Heart left ventricle (tissue), 16 donors: ENCODE measurements at regions of chr7 and their contacts with region 1.

Region 1: DNA sequence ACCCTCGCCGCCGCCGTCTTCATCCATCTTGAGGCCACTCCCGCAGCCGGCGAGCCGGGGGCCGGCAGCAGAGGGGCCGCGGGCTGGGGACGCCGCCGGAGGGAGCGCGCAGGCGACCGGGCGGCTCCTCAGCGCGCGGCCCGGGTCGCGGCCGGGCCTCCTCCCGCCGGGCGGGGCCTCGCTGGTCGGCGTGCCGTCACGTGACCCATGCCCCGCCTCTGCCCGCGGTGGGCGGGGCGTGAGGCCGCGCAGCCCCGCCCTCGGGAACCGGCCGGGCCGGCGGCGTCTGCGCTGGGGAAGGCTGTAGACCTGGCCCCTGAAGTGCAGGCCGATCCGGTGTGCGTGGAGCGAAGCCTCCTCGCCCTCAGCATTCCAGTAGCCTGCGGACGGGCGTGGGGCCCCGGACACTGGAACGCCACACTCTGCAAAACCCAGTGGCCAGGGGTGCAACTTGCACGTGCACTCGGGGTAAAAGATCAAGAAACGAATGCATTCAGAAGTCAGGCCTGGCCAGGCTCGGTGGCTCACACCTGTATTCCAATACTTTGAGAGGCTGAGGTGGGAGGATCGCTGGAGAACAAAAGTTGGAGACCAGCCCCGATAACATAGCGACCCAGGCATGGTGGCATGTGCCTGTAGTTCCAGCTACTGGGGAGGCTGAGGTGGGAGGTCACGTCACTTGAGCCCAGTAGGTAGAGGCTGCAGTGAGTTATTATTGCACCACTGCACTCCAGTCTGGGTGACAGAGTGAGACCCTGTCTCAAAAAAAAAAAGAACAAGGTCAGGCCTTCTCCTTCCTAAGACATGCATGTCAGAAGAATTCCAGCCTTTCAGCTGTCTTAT is at the start of gene CYTH3:
- DNase-seq: peak; percentile 72 to 93 (median 88)
- ATAC-seq: peak; percentile 79 to 97 (median 92)
- H3K4me3 ChIP-seq: peak within 1 kb of the TSS; percentile 75 to 98 (median 94)
- H3K27ac ChIP-seq: peak within 1 kb of the TSS; percentile 73 to 95 (median 90)
- H3K4me1 ChIP-seq: peaks cover 7 to 43% (median 27%) of the 10 kb centered on the region in 12 donors
- H3K27me3 ChIP-seq: no peaks in the 10 kb centered on the region
- CTCF ChIP-seq: peak in 1 of 12 donors; percentile 3
- POLR2A ChIP-seq: peak; percentile 10 to 53
- total RNA-seq, gene CYTH3: 17.2 to 49.7 (median 22.1) TPM

Region 2: GRCh38 chr7:6015917-6016652 is 256.6 kb before region 1 on chr7:
- intact Hi-C with region 1: no loop called
- DNase-seq: peak; percentile 46 to 81 (median 77)
- ATAC-seq: peak; percentile 62 to 90 (median 82)
- H3K4me3 ChIP-seq: no peak overlapping the region
- H3K27ac ChIP-seq: peak overlapping the region in 8 of 12 donors; percentile 0 to 67 (median 46)
- H3K4me1 ChIP-seq: peaks cover 0 to 30% (median 6%) of the 10 kb centered on the region in 12 donors
- H3K27me3 ChIP-seq: no peaks in the 10 kb centered on the region
- CTCF ChIP-seq: no peak
- POLR2A ChIP-seq: no peak

Region 3: DNA sequence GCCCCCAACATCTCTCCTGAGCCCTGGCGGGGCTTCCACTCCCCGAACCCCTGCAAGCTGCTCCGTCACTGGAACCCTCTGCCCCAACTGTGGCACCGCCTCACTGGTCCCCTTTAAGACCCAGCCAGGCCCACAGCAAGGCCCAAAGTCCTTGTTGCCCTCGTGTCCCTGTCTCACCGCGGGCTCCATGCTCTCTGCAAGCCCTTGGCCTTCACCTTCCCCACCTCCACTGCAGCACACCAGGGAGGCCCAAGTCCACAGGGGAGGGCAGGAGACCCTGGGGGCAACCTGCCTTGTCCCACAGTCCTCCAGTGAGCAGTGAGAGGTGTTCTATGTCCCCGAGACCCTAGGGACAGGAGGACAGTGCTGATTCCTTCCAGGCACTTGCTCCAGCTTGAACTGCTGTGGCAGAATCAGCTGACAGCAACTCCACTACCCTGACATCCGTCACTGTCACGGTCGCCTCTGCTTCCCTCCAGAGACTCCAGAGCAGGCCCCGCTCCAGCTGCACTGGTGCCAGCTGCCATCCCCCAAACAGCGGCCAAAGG is 105.6 kb before region 1 on chr7:
- intact Hi-C with region 1: loop called in 8 of 10 experiments (anchors 2 to 5 kb)
- DNase-seq: peak in 4 of 5 donors; percentile 55 to 71 (median 63)
- ATAC-seq: peak; percentile 45 to 75 (median 64)
- H3K4me3 ChIP-seq: no peak overlapping the region
- H3K27ac ChIP-seq: peak overlapping the region in 11 of 12 donors; percentile 14 to 80 (median 68)
- H3K4me1 ChIP-seq: peaks cover 3 to 79% (median 36%) of the 10 kb centered on the region in 12 donors
- H3K27me3 ChIP-seq: no peaks in the 10 kb centered on the region
- CTCF ChIP-seq: no peak
- POLR2A ChIP-seq: no peak

Region 4: GRCh38 chr7:6205971-6206660 is 66.6 kb before region 1 on chr7:
- intact Hi-C with region 1: loop called in 1 of 10 experiments (anchors 5 kb)
- DNase-seq: no peak
- ATAC-seq: no peak
- H3K4me3 ChIP-seq: no peak overlapping the region
- H3K27ac ChIP-seq: no peak overlapping the region
- H3K4me1 ChIP-seq: peaks cover 0 to 65% (median 23%) of the 10 kb centered on the region in 12 donors
- H3K27me3 ChIP-seq: no peaks in the 10 kb centered on the region
- CTCF ChIP-seq: no peak
- POLR2A ChIP-seq: no peak

Region 5: DNA sequence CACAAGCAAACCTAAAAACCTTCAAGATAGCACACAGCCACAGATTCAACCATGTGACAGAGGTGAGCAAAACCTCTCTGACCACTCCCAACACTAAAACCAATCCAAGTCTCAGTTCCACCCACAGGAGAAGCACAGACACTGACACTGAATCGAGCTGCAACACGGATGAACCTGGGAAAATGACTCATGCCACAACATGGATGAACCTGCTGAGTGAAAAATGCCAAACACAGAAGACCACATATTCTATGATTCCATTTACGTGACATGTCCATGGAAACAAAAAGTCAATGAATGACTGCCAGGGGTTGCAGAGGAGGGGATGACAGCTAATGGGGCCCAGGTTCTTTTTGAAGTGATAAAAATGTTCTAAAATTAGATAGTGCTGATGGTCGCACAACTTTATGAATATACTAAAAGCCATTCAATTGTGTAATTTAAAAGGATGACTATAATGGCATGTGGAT is 22.3 kb before region 1 on chr7:
- intact Hi-C with region 1: no loop called
- DNase-seq: no peak
- ATAC-seq: peak in 2 of 4 donors; percentile 7 to 20
- H3K4me3 ChIP-seq: no peak overlapping the region
- H3K27ac ChIP-seq: peak overlapping the region in 2 of 12 donors; percentile 3 to 4
- H3K4me1 ChIP-seq: peaks cover 3 to 98% (median 59%) of the 10 kb centered on the region in 12 donors
- H3K27me3 ChIP-seq: no peaks in the 10 kb centered on the region
- CTCF ChIP-seq: no peak
- POLR2A ChIP-seq: no peak

Region 6: GRCh38 chr7:6310271-6310971 is 37.7 kb after region 1 on chr7:
- intact Hi-C with region 1: loop called in 3 of 10 experiments (anchors 5 kb)
- DNase-seq: peak in 1 of 5 donors; percentile 3
- ATAC-seq: no peak
- H3K4me3 ChIP-seq: no peak overlapping the region
- H3K27ac ChIP-seq: no peak overlapping the region
- H3K4me1 ChIP-seq: peaks cover 0 to 3% (median 0%) of the 10 kb centered on the region in 12 donors
- H3K27me3 ChIP-seq: no peaks in the 10 kb centered on the region
- CTCF ChIP-seq: no peak
- POLR2A ChIP-seq: no peak

Region 7: DNA sequence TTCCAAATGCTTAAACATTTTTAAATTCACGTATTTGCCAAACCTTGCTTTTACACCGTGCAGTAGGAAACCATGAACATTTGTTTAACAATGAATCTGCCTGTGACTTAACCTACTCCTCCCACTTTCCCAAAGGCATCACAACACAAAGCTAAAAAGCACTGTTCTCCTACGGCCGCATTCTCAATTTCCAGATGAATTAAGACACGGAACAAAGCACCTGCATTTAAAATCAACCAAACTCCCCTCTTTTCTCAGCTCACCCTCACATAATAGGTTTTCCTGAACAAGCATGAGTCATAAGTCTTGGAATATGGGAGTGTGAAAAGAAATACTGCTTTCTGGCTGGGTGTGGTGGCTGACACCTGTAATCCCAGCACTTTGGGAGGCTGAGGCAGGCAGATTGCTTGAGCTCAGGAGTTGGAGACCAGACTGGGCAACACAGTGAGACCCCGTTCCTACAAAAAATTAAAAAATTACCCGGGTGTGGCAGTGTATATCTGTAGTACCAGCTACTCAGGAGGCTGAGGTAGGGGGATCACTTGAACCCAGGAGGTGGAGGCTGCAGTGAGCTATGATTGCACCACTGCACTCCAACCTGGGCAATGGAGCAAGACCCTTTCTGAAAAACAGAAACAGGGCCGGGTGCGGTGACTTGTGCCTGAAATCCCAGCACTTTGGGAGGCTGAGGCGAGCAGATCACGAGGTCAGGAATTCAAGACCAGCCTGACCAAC is 51.4 kb after region 1 on chr7:
- intact Hi-C with region 1: loop called in 6 of 10 experiments (anchors 2 to 5 kb)
- DNase-seq: no peak
- ATAC-seq: no peak
- H3K4me3 ChIP-seq: no peak overlapping the region
- H3K27ac ChIP-seq: no peak overlapping the region
- H3K4me1 ChIP-seq: peaks cover 0 to 2% (median 0%) of the 10 kb centered on the region in 12 donors
- H3K27me3 ChIP-seq: no peaks in the 10 kb centered on the region
- CTCF ChIP-seq: no peak
- POLR2A ChIP-seq: no peak